ENCODE measurements at regions of chr1 and their contacts with region 1.

Region 1: GRCh38 chr1:169485544-169486278 is at the start of gene SLC19A2:
- DNase-seq: peak; percentile 91
- ATAC-seq: peak; percentile 98
- H3K4me3 ChIP-seq: peak within 1 kb of the TSS; percentile 88
- H3K27ac ChIP-seq: peak within 1 kb of the TSS; percentile 68
- H3K4me1 ChIP-seq: peaks cover 8% of the 10 kb centered on the region
- H3K27me3 ChIP-seq: no peaks in the 10 kb centered on the region
- CTCF ChIP-seq: peak; percentile 30 to 53 (median 44); a peak in 5 of 6 replicates
- EP300 ChIP-seq: no peak; a peak in 1 of 4 replicates
- POLR2A ChIP-seq: peak; percentile 91
- RAD21 ChIP-seq: no peak
- polyA plus RNA-seq, gene SLC19A2: 1.2 to 1.3 TPM

Region 2: GRCh38 chr1:169367486-169368405 is 118.0 kb before region 1 on chr1 and contains the starts of genes BLZF1 and NME7:
- CTCF ChIA-PET with region 1: no interaction called
- POLR2A ChIA-PET with region 1: interaction called, 3 read pairs
- RAD21 ChIA-PET with region 1: no interaction called
- SMC1A ChIA-PET with region 1: interaction called, 3 read pairs
- in situ Hi-C with region 1: no loop called
- intact Hi-C with region 1: loop called (anchors 2 kb)
- DNase-seq: peak; percentile 94
- ATAC-seq: peak; percentile 98
- H3K4me3 ChIP-seq: peak within 1 kb of the TSS; percentile 93
- H3K27ac ChIP-seq: peak within 1 kb of the TSS; percentile 11
- H3K4me1 ChIP-seq: peaks cover 4% of the 10 kb centered on the region; the same call in 1 of the 2 replicates
- H3K27me3 ChIP-seq: no peaks in the 10 kb centered on the region
- CTCF ChIP-seq: no peak
- EP300 ChIP-seq: no peak
- POLR2A ChIP-seq: peak; percentile 11; the same call in 1 of the 2 replicates
- RAD21 ChIP-seq: no peak
- polyA plus RNA-seq, gene BLZF1: 6.4 to 9.4 TPM
- polyA plus RNA-seq, gene NME7: 8.0 to 8.1 TPM

Region 3: DNA sequence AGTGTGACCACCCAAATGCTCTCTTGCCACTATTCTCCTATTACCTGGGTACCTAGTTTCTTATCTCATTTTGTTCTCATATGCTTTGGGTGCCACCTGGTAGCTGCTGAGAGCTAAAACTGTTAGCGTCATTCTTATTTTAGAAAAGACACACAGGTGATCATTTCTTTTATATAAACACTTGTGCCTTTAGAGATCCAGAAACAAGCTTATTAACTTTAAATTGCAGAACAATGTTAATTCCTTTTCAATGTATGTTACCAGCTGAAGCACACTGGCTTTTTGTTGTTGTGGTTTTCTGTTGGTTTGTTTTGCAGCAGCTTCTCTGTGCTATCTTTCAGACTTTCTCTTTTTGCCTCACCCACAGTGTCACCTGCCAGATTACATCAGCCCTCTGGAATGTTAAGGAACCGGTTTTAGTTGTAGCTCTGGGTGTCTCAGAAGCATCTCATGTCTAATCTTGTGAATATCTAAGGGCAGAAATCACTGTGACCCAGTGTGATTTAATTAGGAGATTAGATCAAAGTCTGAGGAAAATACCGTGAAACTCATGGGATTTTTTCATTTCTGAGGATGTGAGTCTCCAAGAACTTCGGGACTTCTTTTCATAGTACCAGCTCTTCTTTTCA is 43.5 kb after region 1 on chr1:
- CTCF ChIA-PET with region 1: interaction called, 3 read pairs
- POLR2A ChIA-PET with region 1: interaction called, 3 read pairs
- RAD21 ChIA-PET with region 1: interaction called, 4 read pairs
- SMC1A ChIA-PET with region 1: no interaction called
- in situ Hi-C with region 1: no loop called
- intact Hi-C with region 1: loop called (anchors 5 kb)
- DNase-seq: no peak
- ATAC-seq: peak; percentile 33
- H3K4me3 ChIP-seq: no peak overlapping the region
- H3K27ac ChIP-seq: no peak overlapping the region
- H3K4me1 ChIP-seq: peaks cover 10% of the 10 kb centered on the region; the same call in 1 of the 2 replicates
- H3K27me3 ChIP-seq: no peaks in the 10 kb centered on the region
- CTCF ChIP-seq: no peak; a peak in 1 of 6 replicates
- EP300 ChIP-seq: no peak
- POLR2A ChIP-seq: no peak
- RAD21 ChIP-seq: no peak

Region 4: GRCh38 chr1:169794530-169795416 is 309.1 kb after region 1 on chr1 and contains the start of gene METTL18:
- CTCF ChIA-PET with region 1: no interaction called
- POLR2A ChIA-PET with region 1: no interaction called
- RAD21 ChIA-PET with region 1: no interaction called
- SMC1A ChIA-PET with region 1: no interaction called
- in situ Hi-C with region 1: no loop called
- intact Hi-C with region 1: loop called (anchors 5 kb)
- DNase-seq: peak; percentile 84
- ATAC-seq: peak; percentile 95
- H3K4me3 ChIP-seq: peak within 1 kb of the TSS; percentile 86
- H3K27ac ChIP-seq: peak within 1 kb of the TSS; percentile 76
- H3K4me1 ChIP-seq: 0 out of 2 replicates have a peak, but pooled peaks cover 2% of the 10 kb centered on the region
- H3K27me3 ChIP-seq: no peaks in the 10 kb centered on the region
- CTCF ChIP-seq: no peak
- EP300 ChIP-seq: no peak
- POLR2A ChIP-seq: peak; percentile 84
- RAD21 ChIP-seq: no peak
- polyA plus RNA-seq, gene METTL18: 30.0 to 31.8 TPM

Measured in GM12878 (cell line).